Ascending aorta (tissue), 2 donors: ENCODE measurements at regions of chr11 and their contacts with region 1.

Region 1: GRCh38 chr11:114135737-114136151 is 76.2 kb downstream of the ZBTB16 start:
- DNase-seq: no peak
- H3K4me3 ChIP-seq: peak overlapping the region in 1 of 2 donors; percentile 9
- H3K27ac ChIP-seq: peak overlapping the region; percentile 92 to 99
- H3K4me1 ChIP-seq: peaks cover 57 to 89% of the 10 kb centered on the region in 2 donors
- H3K27me3 ChIP-seq: no peaks in the 10 kb centered on the region
- CTCF ChIP-seq: no peak

Region 2: GRCh38 chr11:113934761-113935160 is 201.0 kb before region 1 on chr11:
- intact Hi-C with region 1: no loop called
- DNase-seq: no peak
- H3K4me3 ChIP-seq: no peak overlapping the region
- H3K27ac ChIP-seq: no peak overlapping the region
- H3K4me1 ChIP-seq: no peaks in the 10 kb centered on the region
- H3K27me3 ChIP-seq: no peaks in the 10 kb centered on the region
- CTCF ChIP-seq: no peak

Region 3: DNA sequence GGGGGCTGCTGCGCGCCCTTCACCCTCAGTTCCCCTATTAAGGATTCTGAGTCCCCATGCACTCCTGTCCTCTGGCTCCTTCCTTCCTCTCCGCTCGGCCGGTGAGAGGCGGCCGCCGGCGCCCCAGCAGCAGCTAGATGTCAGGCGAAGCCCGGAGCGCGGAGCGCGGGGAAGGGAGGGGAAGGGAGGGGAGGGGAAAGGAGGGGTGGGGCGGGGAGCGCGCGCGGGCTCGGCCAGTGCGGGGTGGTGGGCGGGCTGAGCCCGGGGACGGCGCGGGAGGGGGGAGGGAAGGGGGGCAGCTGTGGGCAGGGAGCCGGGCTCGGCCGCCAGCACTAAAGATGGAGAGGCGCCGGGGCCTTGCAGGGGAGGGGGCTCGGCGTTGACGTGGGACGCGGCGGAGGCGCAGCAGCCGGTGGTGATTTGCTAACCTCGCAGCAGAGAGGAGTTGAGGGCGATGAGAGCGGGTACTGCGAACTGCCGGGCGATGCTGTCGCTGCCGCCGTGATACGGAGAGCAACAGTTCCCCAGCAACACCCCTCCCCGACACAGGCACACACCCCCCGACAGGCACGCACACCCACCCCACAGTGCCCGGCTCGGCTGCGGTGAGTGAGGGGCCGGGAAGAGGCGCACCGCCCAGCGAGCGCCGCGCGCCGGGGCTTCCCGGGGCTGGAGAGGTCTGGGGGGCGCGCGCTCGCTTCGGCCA is 76.3 kb before region 1 on chr11 and contains the start of gene ZBTB16:
- intact Hi-C with region 1: loop called (anchors 2 kb)
- DNase-seq: peak; percentile 54 to 94
- H3K4me3 ChIP-seq: peak within 1 kb of the TSS; percentile 87 to 99
- H3K27ac ChIP-seq: peak within 1 kb of the TSS; percentile 97 to 98
- H3K4me1 ChIP-seq: peaks cover 4 to 17% of the 10 kb centered on the region in 2 donors
- H3K27me3 ChIP-seq: no peaks in the 10 kb centered on the region
- CTCF ChIP-seq: peak; percentile 6 to 75 (median 40)
- total RNA-seq, gene ZBTB16: 344 TPM

Region 4: DNA sequence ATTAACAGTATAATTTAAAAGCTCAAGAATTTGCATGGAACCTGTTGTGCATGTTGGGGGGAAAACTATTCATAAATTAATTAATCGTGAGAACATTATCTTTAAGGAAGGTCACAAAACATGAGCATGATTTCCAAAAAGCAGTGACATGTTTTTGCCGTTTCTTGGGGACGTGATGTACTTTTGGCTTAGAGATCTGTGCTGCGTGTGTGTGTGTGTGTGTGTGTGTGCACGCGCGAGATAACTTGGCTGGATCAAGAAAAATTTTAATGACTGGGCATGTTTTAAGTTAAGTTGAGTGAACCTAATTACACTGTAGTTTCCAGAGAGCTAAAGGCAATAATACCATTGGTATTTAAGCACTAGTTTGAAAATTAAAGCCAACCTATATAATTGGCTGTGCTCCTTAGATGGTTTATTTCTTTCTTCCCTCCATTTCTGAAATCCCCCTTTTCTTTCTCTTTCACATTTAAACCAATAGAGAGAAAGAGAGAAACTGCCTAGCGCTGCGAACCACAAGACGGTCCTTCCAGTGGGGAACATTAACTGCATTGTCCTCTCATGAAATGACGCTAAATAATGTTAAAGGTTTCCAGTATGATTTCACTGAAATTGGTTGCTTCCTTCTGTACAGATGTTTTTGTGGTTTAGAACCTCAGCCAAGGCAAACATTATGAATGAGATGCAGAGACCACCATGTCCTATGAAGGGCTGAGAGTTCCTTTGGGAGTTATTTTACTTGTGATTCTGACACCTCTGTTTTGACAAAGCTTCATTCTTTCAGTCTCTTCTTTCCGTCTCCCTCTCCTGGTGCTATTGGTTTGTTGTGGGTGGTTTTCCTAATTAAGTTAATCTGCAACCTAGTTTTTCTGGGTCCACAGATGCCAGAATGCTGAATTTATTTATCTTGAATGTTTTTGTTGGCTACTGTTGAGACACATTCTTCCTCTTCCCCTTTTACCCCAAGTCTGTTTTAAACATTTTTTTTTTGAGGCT is 24.5 kb before region 1 on chr11:
- intact Hi-C with region 1: loop called (anchors 2 kb)
- DNase-seq: peak in 1 of 2 donors; percentile 84
- H3K4me3 ChIP-seq: peak overlapping the region; percentile 23 to 44
- H3K27ac ChIP-seq: peak overlapping the region; percentile 77 to 87
- H3K4me1 ChIP-seq: peaks cover 23 to 77% of the 10 kb centered on the region in 2 donors
- H3K27me3 ChIP-seq: no peaks in the 10 kb centered on the region
- CTCF ChIP-seq: no peak

Region 5: DNA sequence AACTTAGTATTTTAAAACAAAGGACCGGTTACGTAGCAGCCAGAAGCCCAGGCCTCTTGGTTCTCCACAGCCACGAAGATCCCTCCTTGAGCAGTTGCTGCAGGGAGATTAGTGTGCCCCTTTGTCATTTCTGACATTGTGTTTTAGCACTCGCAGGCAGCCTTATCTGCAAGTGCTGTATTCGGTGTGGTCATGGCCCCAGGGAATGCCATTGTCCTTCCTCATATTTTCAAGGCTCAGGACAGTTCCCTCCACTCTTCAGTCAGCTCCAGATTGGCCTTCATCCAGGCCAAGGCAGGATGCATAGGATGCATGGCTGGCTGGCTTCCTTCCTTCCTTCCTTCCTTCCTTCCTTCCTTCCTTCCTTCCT is 12.3 kb after region 1 on chr11:
- intact Hi-C with region 1: loop called (anchors 2 kb)
- DNase-seq: no peak
- H3K4me3 ChIP-seq: no peak overlapping the region
- H3K27ac ChIP-seq: peak overlapping the region; percentile 92 to 99
- H3K4me1 ChIP-seq: peaks cover 54 to 95% of the 10 kb centered on the region in 2 donors
- H3K27me3 ChIP-seq: no peaks in the 10 kb centered on the region
- CTCF ChIP-seq: no peak

Region 6: DNA sequence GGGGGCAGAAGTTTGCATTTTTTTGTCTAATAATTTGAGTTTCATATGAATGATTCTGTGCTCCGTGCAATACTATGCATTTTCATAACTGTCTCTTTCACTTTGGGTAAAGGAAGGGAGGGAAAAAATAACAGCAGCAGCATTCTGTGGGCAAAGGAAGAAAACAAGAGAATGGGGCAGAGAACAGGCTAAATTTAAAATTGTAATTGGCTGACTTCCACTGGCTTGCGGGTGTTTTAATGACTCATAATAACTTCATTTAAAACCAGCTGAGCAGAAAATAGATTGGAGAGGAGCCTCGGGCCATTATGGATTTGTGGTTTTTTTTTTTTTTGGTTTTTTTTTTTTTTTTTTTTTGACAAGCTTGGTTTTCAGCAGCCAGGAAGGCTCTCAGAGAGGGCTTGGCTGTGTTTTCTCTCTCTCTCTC is 31.2 kb after region 1 on chr11:
- intact Hi-C with region 1: loop called (anchors 5 kb)
- DNase-seq: no peak
- H3K4me3 ChIP-seq: no peak overlapping the region
- H3K27ac ChIP-seq: peak overlapping the region; percentile 92 to 99
- H3K4me1 ChIP-seq: peaks cover 73 to 92% of the 10 kb centered on the region in 2 donors
- H3K27me3 ChIP-seq: no peaks in the 10 kb centered on the region
- CTCF ChIP-seq: no peak